ENCODE measurements at regions of chr20 and their contacts with region 1.

Region 1: DNA sequence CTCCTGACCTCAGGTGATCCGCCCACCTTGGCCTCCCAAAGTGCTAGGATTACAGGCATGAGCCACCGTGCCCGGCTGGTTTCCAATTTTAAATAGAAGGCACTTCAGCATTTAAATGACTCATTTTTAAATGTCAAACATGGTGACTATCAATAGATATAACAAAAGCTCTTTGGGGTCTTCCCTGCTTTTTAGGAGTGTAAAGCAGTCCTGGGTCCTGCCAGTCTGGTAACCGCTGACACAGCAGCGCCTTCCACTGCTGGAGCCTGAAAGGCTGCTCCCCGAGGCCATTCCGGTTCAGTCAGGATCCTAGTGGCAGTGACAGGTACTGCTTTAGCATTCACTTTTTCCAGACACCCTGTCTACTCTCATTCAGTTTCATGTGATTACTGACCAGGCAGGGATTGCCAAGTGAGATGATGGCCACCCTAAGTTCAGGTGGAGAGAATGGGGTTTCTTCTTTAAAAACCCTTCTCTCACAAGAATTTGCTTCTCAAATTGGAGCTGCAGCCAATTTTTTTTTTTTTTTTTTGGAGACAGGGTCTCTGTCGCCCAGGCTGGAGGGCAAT is 5.1 kb downstream of the DIDO1 start:
- DNase-seq: peak; percentile 57
- ATAC-seq: peak; percentile 46
- H3K4me3 Mint-ChIP-seq: peak overlapping the region; percentile 77
- H3K27ac Mint-ChIP-seq: peak overlapping the region; percentile 86
- H3K4me1 Mint-ChIP-seq: peaks cover 70% of the 10 kb centered on the region
- H3K27me3 Mint-ChIP-seq: no peaks in the 10 kb centered on the region

Region 2: DNA sequence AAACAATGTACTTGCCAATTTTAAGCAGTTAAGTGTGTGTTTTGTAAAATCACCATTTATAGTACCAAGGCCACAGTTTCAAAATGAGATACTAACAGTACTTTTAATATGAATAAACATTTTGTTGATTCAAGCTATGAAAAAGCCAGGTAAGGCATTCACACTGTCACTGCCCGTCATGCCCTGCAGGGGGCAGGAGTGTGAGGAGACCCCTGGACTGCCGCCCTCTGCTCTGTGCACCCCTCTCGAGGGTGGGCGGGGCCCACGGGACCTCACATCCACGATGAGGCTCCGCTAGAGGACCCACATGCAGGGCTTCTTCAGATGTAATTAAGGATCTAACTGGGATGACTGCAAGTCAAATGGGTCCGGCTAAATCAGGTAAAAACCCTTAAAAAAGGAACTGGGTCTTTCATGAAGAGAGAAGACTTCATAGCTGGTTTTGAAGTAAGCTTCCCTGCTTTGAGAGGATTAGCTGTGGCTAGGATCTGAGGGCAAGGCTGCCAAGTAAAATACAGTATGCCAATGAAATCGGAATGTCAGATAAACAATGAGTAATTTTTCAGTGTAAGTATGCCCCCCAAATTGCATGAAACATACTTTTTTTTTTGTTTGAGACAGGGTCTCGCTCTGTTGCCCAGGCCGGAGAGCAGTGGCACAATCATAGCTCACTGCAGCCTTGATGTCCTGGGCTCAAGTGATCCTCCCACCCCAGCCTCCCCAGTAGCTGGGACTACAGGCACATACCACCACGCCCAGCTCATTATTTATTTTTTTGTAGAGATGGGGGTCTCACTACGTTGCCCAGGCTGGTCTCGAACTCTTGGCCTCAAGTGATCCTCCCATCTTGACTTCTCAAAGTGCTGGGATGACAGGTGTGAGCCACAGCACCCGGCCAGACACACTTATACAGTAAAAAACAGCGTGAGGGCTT is 13.6 kb before region 1 on chr20:
- POLR2A ChIA-PET with region 1: interaction called, 55 read pairs
- DNase-seq: no peak
- ATAC-seq: peak; percentile 53
- H3K4me3 Mint-ChIP-seq: no peak overlapping the region
- H3K27ac Mint-ChIP-seq: peak overlapping the region; percentile 42
- H3K4me1 Mint-ChIP-seq: peaks cover 22% of the 10 kb centered on the region
- H3K27me3 Mint-ChIP-seq: no peaks in the 10 kb centered on the region

Region 3: GRCh38 chr20:62937366-62938104 is 16.3 kb after region 1 on chr20:
- POLR2A ChIA-PET with region 1: interaction called, 85 read pairs
- DNase-seq: peak; percentile 99
- ATAC-seq: peak; percentile 85
- H3K4me3 Mint-ChIP-seq: no peak overlapping the region
- H3K27ac Mint-ChIP-seq: peak overlapping the region; percentile 97
- H3K4me1 Mint-ChIP-seq: peaks cover 25% of the 10 kb centered on the region
- H3K27me3 Mint-ChIP-seq: no peaks in the 10 kb centered on the region

Region 4: GRCh38 chr20:62953839-62954703 is 32.9 kb after region 1 on chr20:
- POLR2A ChIA-PET with region 1: interaction called, 28 read pairs
- DNase-seq: peak; percentile 85
- ATAC-seq: peak; percentile 93
- H3K4me3 Mint-ChIP-seq: peak overlapping the region; percentile 85
- H3K27ac Mint-ChIP-seq: peak overlapping the region; percentile 93
- H3K4me1 Mint-ChIP-seq: peaks cover 21% of the 10 kb centered on the region
- H3K27me3 Mint-ChIP-seq: no peaks in the 10 kb centered on the region

Measured in activated naive CD8-positive, alpha-beta T cell treated with anti-CD3 and anti-CD28 coated beads, Interleukin-2, amount 10 ng/mL, durations not matched to agents 7 days and 5 days (primary cell).